Caco-2 (cell line): ENCODE measurements at regions of chr1 and their contacts with region 1.

Region 1: DNA sequence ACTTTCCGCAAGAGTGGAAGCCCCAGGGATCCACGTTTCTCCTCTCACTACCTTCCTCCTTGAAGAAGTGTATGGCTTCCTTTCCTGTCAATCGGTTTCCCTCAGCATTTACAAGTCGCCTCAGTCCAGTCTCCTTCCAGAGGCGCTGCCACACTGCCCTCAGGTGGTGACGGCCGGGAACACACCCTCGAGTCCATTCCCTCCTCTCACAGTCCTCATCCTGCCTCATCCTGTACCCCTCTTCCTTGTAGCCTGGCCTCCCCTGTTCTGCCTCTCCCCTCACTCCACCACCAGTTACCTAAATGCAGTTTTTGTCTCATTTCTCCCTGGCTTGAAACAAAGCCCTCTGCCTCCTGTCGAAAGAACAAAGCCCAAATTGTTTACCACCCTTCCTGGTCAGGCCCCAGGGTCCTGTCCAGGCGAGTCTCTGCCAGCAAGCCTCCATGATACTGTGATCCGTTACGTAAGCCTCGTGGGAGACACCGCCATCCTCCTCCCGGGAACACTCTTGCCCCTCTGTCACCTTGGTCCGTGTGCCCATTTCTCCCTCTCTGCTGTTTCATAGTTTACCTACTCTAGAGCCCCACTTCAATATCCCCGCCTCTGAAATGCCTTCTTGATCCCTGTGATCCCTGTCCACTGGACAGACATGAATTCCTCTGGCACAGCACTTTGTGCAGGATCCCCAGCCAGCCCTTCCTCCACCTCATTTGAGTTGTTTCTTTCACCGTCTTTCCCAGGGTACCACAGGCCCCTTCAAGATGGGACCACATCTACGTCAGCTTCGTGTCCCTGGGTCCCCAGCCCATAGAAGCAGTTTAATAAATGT is 23.3 kb upstream of the LSM10 start:
- DNase-seq: peak; percentile 78 to 87
- H3K4me3 ChIP-seq: no peak overlapping the region
- H3K4me3 Mint-ChIP-seq: no peak overlapping the region
- H3K27ac Mint-ChIP-seq: peak overlapping the region; percentile 56
- H3K4me1 ChIP-seq: no peaks in the 10 kb centered on the region
- H3K4me1 Mint-ChIP-seq: no peaks in the 10 kb centered on the region
- H3K27me3 ChIP-seq: no peaks in the 10 kb centered on the region
- H3K27me3 Mint-ChIP-seq: no peaks in the 10 kb centered on the region
- CTCF ChIP-seq: peak; percentile 78 to 86

Region 2: GRCh38 chr1:36099681-36100341 is 321.2 kb before region 1 on chr1:
- CTCF ChIA-PET with region 1: interaction called, 6 read pairs
- POLR2A ChIA-PET with region 1: no interaction called
- intact Hi-C with region 1: loop called (anchors 2 kb)
- DNase-seq: peak; percentile 73 to 78
- H3K4me3 ChIP-seq: no peak overlapping the region
- H3K4me3 Mint-ChIP-seq: no peak overlapping the region
- H3K27ac Mint-ChIP-seq: no peak overlapping the region
- H3K4me1 ChIP-seq: no peaks in the 10 kb centered on the region
- H3K4me1 Mint-ChIP-seq: no peaks in the 10 kb centered on the region
- H3K27me3 ChIP-seq: no peaks in the 10 kb centered on the region
- H3K27me3 Mint-ChIP-seq: no peaks in the 10 kb centered on the region
- CTCF ChIP-seq: peak; percentile 78 to 79

Region 3: DNA sequence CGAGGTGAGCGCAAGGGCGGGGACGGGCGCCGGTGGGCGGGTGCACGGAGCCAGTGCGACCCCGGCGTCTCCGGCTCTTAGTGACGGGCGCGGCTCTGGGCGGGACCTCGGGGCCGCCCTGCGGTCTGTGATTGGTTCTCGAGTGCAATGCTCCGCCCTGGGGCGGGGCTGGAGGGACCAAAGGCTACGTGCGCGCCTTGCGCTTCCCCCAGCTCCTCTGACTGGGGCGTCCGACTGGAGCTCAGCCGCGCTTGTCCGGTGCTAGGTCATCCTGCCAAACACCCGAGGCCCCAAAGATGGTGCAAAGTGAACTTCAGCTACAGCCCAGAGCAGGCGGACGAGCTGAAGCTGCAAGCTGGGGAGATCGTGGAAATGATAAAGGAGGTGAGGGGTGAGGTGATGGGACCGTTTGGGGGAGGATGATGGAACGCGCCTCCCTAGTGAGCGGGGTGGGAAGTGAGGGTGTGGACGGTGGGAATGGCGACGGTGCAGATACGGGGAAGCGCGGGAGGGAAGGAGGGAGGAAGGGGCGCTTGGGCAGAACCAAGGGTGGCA is 114.1 kb before region 1 on chr1:
- CTCF ChIA-PET with region 1: no interaction called
- POLR2A ChIA-PET with region 1: no interaction called
- intact Hi-C with region 1: loop called (anchors 1 kb)
- DNase-seq: peak; percentile 91 to 94
- H3K4me3 ChIP-seq: peak overlapping the region; percentile 53
- H3K4me3 Mint-ChIP-seq: peak overlapping the region; percentile 82
- H3K27ac Mint-ChIP-seq: peak overlapping the region; percentile 46
- H3K4me1 ChIP-seq: peaks cover 10% of the 10 kb centered on the region
- H3K4me1 Mint-ChIP-seq: no peaks in the 10 kb centered on the region
- H3K27me3 ChIP-seq: no peaks in the 10 kb centered on the region
- H3K27me3 Mint-ChIP-seq: no peaks in the 10 kb centered on the region
- CTCF ChIP-seq: no peak

Region 4: DNA sequence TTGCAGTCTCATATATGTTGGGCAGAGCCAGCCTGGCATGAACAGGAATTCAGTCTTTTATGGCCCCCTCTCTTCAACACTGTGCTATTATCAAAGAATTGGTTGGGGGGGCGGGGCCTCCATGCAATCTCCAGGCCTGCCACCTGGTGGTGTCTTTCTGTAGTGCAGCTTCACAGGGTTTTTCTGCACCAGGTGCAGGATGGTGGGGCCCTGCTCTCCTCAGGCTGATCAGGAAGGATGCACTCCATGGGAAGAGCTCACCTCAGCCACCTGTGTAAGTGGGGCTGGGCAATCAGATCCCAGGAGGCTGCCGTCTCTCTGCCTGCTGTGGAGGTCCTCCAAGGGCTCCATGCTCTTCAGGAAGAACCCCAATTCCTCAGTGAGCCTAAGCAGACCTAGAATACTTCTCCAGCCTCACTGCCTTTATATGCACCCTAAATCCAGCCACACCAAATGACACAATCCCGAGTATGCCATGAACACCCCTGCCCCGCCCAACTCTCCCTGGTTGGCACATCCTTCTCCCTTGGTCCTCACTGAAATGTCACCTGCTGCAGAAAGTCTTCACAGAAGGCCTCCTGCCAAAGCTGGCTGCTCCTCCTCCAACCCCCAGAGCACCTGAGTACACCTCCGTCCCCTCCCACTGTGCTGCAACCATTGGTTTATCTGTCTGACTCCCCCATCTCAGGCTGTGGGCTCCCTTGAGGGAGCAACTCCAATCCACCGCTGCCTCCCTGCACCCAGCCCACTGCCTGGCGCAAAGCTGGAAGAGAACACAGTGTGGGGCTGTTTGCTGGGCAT is 51.8 kb before region 1 on chr1:
- CTCF ChIA-PET with region 1: interaction called, 4 read pairs
- POLR2A ChIA-PET with region 1: no interaction called
- intact Hi-C with region 1: loop called (anchors 1 kb)
- DNase-seq: peak; percentile 67 to 79
- H3K4me3 ChIP-seq: no peak overlapping the region
- H3K4me3 Mint-ChIP-seq: no peak overlapping the region
- H3K27ac Mint-ChIP-seq: no peak overlapping the region
- H3K4me1 ChIP-seq: no peaks in the 10 kb centered on the region; the same call in 1 of the 2 replicates
- H3K4me1 Mint-ChIP-seq: no peaks in the 10 kb centered on the region
- H3K27me3 ChIP-seq: no peaks in the 10 kb centered on the region
- H3K27me3 Mint-ChIP-seq: no peaks in the 10 kb centered on the region
- CTCF ChIP-seq: peak; percentile 68 to 71

Region 5: GRCh38 chr1:36385410-36386257 is 35.4 kb before region 1 on chr1 and contains the start of gene STK40:
- CTCF ChIA-PET with region 1: no interaction called
- POLR2A ChIA-PET with region 1: interaction called, 5 read pairs
- intact Hi-C with region 1: loop called (anchors 5 kb)
- DNase-seq: peak; percentile 94 to 98
- H3K4me3 ChIP-seq: peak within 1 kb of the TSS; percentile 76
- H3K4me3 Mint-ChIP-seq: peak within 1 kb of the TSS; percentile 79
- H3K27ac Mint-ChIP-seq: peak within 1 kb of the TSS; percentile 100
- H3K4me1 ChIP-seq: peaks cover 16% of the 10 kb centered on the region; the same call in 1 of the 2 replicates
- H3K4me1 Mint-ChIP-seq: peaks cover 33% of the 10 kb centered on the region
- H3K27me3 ChIP-seq: no peaks in the 10 kb centered on the region
- H3K27me3 Mint-ChIP-seq: no peaks in the 10 kb centered on the region
- CTCF ChIP-seq: no peak
- total RNA-seq, gene STK40: 26.7 and 29.7 TPM in 2 replicates

Region 6: DNA sequence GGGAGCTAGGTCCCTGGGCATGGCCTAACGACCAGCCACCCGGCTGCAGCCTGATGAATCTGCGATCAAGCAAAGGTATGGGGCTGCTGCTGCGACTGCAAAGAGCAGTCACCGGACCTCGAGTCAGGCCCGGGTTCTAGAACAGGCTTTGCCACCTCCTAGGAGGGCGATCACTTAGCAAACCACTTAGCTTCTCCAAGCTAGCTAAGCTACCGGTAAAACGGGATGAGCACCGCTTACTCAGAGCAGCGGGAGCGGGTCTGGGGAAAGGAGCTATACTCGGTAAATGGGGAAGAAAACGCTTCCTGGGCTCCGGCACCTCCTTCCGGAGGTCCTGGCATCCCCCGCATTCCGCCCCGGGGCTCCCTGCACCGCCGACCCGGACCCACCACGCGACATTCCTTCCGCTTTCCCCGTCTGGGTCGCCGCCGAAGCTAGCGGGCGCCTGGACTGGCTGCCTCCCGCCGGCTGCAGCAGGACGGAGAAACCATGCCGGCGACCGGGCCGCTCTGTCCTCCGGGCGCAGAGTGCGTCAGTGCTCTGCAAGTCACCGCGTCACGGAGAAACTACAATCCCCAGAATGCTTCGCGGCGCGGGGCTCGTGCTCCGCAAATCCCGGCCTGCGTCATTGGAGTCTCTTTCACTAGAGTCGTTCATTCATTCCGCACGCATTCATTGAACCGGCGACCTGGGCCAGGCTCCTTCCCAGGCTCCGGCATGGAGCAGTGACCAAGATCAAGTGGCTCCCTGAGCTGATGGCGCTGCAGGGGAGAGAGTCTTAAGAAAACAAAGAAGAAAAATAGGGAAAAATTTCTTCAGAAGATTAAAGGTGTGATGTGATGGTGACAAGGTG is 23.4 kb before region 1 on chr1 and contains the start of gene LSM10:
- CTCF ChIA-PET with region 1: no interaction called
- POLR2A ChIA-PET with region 1: no interaction called
- intact Hi-C with region 1: loop called (anchors 1 kb)
- DNase-seq: peak; percentile 86 to 87
- H3K4me3 ChIP-seq: peak within 1 kb of the TSS; percentile 70
- H3K4me3 Mint-ChIP-seq: peak within 1 kb of the TSS; percentile 89
- H3K27ac Mint-ChIP-seq: peak within 1 kb of the TSS; percentile 95
- H3K4me1 ChIP-seq: no peaks in the 10 kb centered on the region
- H3K4me1 Mint-ChIP-seq: peaks cover 7% of the 10 kb centered on the region
- H3K27me3 ChIP-seq: no peaks in the 10 kb centered on the region
- H3K27me3 Mint-ChIP-seq: no peaks in the 10 kb centered on the region
- CTCF ChIP-seq: no peak
- total RNA-seq, gene LSM10: 19.6 and 20.7 TPM in 2 replicates

Region 7: DNA sequence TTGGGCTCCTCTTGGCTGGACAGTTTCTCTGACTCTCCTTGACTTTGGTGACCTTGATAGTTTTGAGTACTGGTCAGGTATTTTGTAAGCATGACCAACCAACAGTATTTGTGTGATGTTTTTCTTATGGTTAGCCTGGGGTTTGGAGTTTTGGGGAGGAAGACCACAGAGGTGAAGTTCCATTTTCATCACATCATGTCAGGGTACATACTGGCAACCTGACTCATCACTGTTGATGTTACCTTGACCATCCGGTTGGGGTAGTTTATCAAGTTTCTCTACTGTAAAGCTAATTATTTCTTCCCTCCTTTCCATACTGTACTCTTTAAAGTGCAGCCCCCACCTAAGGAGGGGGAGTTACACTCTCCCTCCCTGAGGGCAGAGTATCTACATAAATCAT is 15.8 kb after region 1 on chr1:
- CTCF ChIA-PET with region 1: no interaction called
- POLR2A ChIA-PET with region 1: no interaction called
- intact Hi-C with region 1: no loop called
- DNase-seq: peak in 1 of 2 experiments; percentile 37
- H3K4me3 ChIP-seq: no peak overlapping the region
- H3K4me3 Mint-ChIP-seq: no peak overlapping the region
- H3K27ac Mint-ChIP-seq: peak overlapping the region; percentile 81
- H3K4me1 ChIP-seq: no peaks in the 10 kb centered on the region
- H3K4me1 Mint-ChIP-seq: peaks cover 6% of the 10 kb centered on the region
- H3K27me3 ChIP-seq: no peaks in the 10 kb centered on the region
- H3K27me3 Mint-ChIP-seq: no peaks in the 10 kb centered on the region
- CTCF ChIP-seq: no peak